MCF 10A (cell line): ENCODE measurements at regions of chr20 and their contacts with region 1.

Region 1: GRCh38 chr20:47854163-47854562 is 68.9 kb upstream of the SULF2 start:
- DNase-seq: no peak
- H3K4me3 Mint-ChIP-seq: no peak overlapping the region
- H3K27ac Mint-ChIP-seq: no peak overlapping the region
- H3K4me1 Mint-ChIP-seq: peaks cover 6% of the 10 kb centered on the region
- H3K27me3 Mint-ChIP-seq: no peaks in the 10 kb centered on the region
- CTCF ChIP-seq: no peak

Region 2: GRCh38 chr20:47662481-47663332 is 191.5 kb before region 1 on chr20:
- CTCF ChIA-PET with region 1: no interaction called
- POLR2A ChIA-PET with region 1: no interaction called
- intact Hi-C with region 1: no loop called
- DNase-seq: no peak
- H3K4me3 Mint-ChIP-seq: no peak overlapping the region
- H3K27ac Mint-ChIP-seq: no peak overlapping the region
- H3K4me1 Mint-ChIP-seq: peaks cover 14% of the 10 kb centered on the region
- H3K27me3 Mint-ChIP-seq: no peaks in the 10 kb centered on the region
- CTCF ChIP-seq: no peak

Region 3: GRCh38 chr20:47775854-47776253 is 78.3 kb before region 1 on chr20:
- CTCF ChIA-PET with region 1: no interaction called
- POLR2A ChIA-PET with region 1: no interaction called
- intact Hi-C with region 1: no loop called
- DNase-seq: no peak
- H3K4me3 Mint-ChIP-seq: no peak overlapping the region
- H3K27ac Mint-ChIP-seq: no peak overlapping the region
- H3K4me1 Mint-ChIP-seq: peaks cover 16% of the 10 kb centered on the region
- H3K27me3 Mint-ChIP-seq: no peaks in the 10 kb centered on the region
- CTCF ChIP-seq: no peak

Region 4: DNA sequence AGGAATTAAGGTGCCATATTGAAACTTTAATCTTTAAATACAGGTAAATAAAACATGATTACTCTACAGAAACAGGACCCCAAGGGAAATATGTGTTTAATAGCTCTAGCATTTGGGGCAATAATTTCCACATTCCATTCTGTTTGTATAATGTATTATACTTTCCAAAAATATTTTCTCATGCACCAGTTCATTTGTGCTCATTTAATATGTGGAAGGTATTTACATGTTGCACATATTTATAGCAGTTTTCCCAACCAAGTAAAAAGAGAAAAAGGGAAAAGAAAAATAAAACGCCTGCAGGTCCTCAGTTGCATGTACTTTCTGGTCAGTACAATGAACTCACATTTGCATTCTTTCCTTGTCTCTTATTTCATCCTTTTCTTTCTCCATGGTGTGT is 60.6 kb after region 1 on chr20:
- CTCF ChIA-PET with region 1: no interaction called
- POLR2A ChIA-PET with region 1: no interaction called
- intact Hi-C with region 1: no loop called
- DNase-seq: no peak
- H3K4me3 Mint-ChIP-seq: no peak overlapping the region
- H3K27ac Mint-ChIP-seq: no peak overlapping the region
- H3K4me1 Mint-ChIP-seq: peaks cover 41% of the 10 kb centered on the region
- H3K27me3 Mint-ChIP-seq: no peaks in the 10 kb centered on the region
- CTCF ChIP-seq: no peak

Region 5: DNA sequence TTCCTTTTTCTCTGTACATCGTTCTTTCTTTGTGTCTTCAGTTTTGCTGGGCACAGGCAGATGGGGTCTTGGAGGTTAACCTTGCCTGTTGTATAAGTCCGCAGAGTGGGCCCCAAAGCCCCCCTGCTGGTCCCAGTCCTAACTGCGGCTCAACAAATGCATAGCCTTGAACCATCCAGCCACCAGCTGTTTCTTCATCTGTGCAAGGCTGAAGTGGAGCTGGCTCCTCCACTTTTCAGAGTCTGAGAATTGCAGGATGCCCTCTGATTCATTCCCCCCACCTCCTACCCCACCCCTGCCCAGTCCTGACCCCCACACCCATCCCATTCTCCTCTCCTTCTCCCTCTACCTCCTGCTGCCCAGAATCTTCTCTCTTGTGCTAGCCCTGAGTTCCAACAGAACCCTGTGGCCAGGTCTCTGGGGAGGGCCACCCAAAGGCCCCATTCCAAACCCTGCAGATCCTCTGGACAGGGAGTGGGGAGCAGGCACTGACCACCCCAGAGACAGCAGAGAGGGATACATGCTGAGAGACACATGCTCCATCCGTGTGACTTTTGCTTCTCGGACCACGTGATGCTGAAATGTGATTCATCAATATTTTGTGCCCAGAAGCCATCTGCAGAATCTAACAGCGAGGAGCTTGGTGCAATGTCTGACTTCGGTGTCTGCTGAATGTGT is 317.7 kb after region 1 on chr20:
- CTCF ChIA-PET with region 1: no interaction called
- POLR2A ChIA-PET with region 1: no interaction called
- intact Hi-C with region 1: no loop called
- DNase-seq: no peak
- H3K4me3 Mint-ChIP-seq: no peak overlapping the region
- H3K27ac Mint-ChIP-seq: no peak overlapping the region
- H3K4me1 Mint-ChIP-seq: no peaks in the 10 kb centered on the region
- H3K27me3 Mint-ChIP-seq: peaks cover 79% of the 10 kb centered on the region
- CTCF ChIP-seq: no peak

Region 6: DNA sequence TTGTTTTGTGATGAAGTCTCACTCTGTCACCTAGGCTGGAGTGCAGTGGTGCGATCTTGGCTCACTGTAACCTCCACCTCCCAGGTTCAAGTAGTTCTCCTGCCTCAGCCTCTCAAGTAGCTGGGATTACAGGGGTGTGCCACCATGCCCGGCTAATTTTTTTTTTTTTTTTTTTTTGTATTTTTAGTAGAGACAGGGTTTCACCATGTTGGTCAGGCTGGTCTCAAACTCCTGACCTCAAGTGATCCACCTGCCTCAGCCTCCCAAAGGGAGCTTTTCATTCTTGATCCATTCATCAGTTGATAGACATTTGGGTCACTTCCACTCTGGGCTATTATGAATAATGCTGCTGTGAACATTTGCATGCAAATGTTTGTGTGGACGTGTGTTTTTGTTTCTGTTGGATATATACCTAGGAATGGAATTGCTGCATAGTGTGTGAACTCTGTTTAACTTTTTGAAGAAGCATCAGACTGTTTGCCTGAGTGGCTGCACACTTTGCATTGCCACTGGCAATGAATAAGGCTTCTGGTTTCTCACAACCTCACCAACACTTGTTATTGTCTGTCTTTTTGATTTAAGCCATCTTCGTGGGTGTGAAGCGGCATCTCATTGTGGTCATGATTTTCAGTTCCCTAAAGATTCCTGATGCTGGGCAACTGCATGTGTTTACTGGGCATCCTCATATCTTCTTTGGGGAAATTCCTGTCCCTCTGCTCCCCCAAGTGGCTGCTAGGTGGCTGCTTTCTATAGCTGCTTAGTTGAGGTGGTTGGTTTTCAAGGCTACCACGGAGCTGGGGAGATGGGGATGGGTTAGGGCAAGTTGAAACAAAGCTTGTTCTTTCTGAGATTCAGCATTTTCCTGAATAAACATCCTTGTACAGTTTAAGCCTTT is 334.7 kb after region 1 on chr20:
- CTCF ChIA-PET with region 1: interaction called, 3 read pairs
- POLR2A ChIA-PET with region 1: interaction called, 5 read pairs
- intact Hi-C with region 1: loop called (anchors 1 kb)
- DNase-seq: peak; percentile 68
- H3K4me3 Mint-ChIP-seq: no peak overlapping the region
- H3K27ac Mint-ChIP-seq: no peak overlapping the region
- H3K4me1 Mint-ChIP-seq: peaks cover 23% of the 10 kb centered on the region
- H3K27me3 Mint-ChIP-seq: no peaks in the 10 kb centered on the region
- CTCF ChIP-seq: peak; percentile 37